ENCODE measurements at regions of chr1 and their contacts with region 1.

Region 1: DNA sequence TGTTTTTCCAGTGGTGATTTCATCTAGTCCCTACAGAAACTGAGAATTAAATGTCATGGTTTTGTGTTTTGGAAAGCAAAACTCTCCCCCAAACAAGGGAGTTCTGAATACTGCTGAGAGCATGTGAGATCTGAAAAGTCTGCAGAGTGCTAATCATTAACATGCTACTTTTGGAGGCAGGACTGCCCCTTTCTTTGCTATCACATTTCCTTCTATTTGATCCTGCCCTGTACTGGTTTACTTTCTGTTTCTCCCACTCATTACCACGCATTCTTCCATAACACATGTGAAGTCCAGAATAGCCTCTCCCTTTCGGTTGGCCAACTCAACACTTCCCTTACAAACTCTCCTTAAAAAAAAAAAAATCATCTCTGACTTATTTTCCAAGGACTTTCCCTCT is 63.6 kb downstream of the GADD45A start:
- ATAC-seq: peak; percentile 26 to 89 (median 48)
- H3K4me3 ChIP-seq: no peak overlapping the region
- H3K27ac ChIP-seq: no peak overlapping the region
- H3K4me1 ChIP-seq: peaks cover 20 to 21% of the 10 kb centered on the region in 2 donors

Region 2: GRCh38 chr1:67685067-67685557 is 63.5 kb before region 1 on chr1 and contains the start of gene GADD45A:
- in situ Hi-C with region 1: loop called in 1 of 9 experiments (anchors 10 kb)
- ATAC-seq: peak; percentile 66 to 93 (median 86)
- H3K4me3 ChIP-seq: peak within 1 kb of the TSS; percentile 54 to 67 (median 59)
- H3K27ac ChIP-seq: peak within 1 kb of the TSS; percentile 93 to 96
- H3K4me1 ChIP-seq: peaks cover 12 to 16% of the 10 kb centered on the region in 2 donors
- total RNA-seq, gene GADD45A: 35.9 to 144 (median 56.1) TPM